ENCODE measurements at regions of chr18 and their contacts with region 1.

Region 1: GRCh38 chr18:41170346-41170745 is 784.7 kb upstream of the PIK3C3 start:
- DNase-seq: no peak
- ATAC-seq: no peak
- H3K4me3 ChIP-seq: no peak overlapping the region
- H3K4me3 Mint-ChIP-seq: no peak overlapping the region
- H3K27ac ChIP-seq: no peak overlapping the region
- H3K27ac Mint-ChIP-seq: no peak overlapping the region
- H3K4me1 ChIP-seq: no peaks in the 10 kb centered on the region
- H3K4me1 Mint-ChIP-seq: no peaks in the 10 kb centered on the region
- H3K27me3 ChIP-seq: no peaks in the 10 kb centered on the region
- H3K27me3 Mint-ChIP-seq: no peaks in the 10 kb centered on the region
- CTCF ChIP-seq: no peak

Region 2: GRCh38 chr18:41121116-41121826 is 49.1 kb before region 1 on chr18:
- CTCF ChIA-PET with region 1: no interaction called
- POLR2A ChIA-PET with region 1: no interaction called
- intact Hi-C with region 1: loop called in 1 of 2 experiments (anchors 5 kb)
- DNase-seq: no peak
- ATAC-seq: no peak
- H3K4me3 ChIP-seq: no peak overlapping the region
- H3K4me3 Mint-ChIP-seq: no peak overlapping the region
- H3K27ac ChIP-seq: no peak overlapping the region
- H3K27ac Mint-ChIP-seq: no peak overlapping the region
- H3K4me1 ChIP-seq: no peaks in the 10 kb centered on the region
- H3K4me1 Mint-ChIP-seq: no peaks in the 10 kb centered on the region
- H3K27me3 ChIP-seq: no peaks in the 10 kb centered on the region
- H3K27me3 Mint-ChIP-seq: no peaks in the 10 kb centered on the region
- CTCF ChIP-seq: no peak

Measured in CD8-positive, alpha-beta T cell (primary cell).